ENCODE measurements at regions of chr22 and their contacts with region 1.

Region 1: DNA sequence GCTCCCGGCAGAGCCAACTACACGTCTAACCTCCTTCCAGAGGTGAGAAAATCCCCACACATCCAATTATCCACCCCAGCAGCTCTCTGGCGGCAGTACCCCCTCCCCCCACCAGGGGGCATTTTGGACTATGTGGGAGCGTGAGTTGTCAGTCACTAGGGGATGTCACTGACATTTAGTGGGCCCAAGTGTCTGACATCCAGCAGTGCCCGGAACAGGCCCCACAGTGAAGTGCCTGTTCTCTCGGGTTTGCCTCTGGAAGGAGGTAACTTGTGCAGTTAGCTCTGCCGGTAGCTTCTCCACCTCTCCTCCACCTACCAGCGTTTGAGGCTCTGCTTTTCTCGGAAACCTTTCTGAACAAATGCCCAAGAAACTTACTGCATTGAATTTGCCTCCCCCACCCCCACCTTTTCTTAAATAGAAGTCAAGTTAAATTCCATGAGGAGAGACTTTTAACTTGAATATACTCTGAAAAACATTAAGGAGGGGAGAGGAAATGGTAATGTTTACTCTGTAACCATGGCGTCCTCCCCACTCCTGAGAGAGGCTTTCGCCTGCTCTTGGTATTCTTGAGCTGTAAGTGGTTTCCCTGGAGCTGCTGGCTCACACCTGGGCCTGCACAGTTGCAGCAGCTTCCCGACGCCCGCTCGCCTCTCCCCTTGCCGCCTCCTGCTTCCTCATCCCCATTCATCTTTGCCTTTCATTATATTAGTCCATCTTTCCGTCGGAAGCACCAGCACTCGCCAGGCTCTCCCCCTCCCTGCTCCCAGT is 112.8 kb downstream of the WNT7B start:
- DNase-seq: peak; percentile 64
- H3K4me3 ChIP-seq: no peak overlapping the region
- H3K27ac ChIP-seq: no peak overlapping the region
- H3K4me1 ChIP-seq: peaks cover 0 to 28% (median 23%) of the 10 kb centered on the region in 4 donors
- H3K27me3 ChIP-seq: peaks cover 23 to 38% (median 29%) of the 10 kb centered on the region in 3 donors
- CTCF ChIP-seq: peak in 3 of 4 experiments; percentile 41 to 74 (median 72)
- EP300 ChIP-seq: no peak
- POLR2A ChIP-seq: no peak

Region 2: GRCh38 chr22:45785458-45785857 is 78.7 kb before region 1 on chr22:
- intact Hi-C with region 1: no loop called
- DNase-seq: no peak
- H3K4me3 ChIP-seq: no peak overlapping the region
- H3K27ac ChIP-seq: no peak overlapping the region
- H3K4me1 ChIP-seq: peaks cover 0 to 21% (median 19%) of the 10 kb centered on the region in 4 donors
- H3K27me3 ChIP-seq: no peaks in the 10 kb centered on the region
- CTCF ChIP-seq: no peak
- EP300 ChIP-seq: no peak
- POLR2A ChIP-seq: no peak

Region 3: DNA sequence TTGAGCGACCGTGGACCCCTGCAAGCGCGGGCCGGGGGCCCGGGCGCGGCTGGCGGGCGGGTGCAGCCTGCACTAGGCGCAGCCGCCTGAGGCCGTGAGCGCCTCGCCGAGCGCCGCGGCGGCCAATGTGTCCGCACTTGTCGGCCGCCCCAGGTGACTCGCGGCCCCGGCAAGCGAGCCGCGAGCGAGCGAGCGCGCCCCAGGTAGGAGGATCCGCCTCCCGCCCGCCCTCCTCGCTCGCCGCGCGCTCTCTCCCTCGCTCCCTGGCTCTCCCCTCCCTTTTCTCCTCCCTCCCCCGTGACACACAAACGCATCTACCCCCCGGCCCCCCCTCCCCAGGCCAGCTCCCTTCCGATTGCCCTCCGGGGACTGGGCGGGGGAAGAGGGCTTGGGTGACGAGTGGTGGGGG is 112.8 kb after region 1 on chr22 and contains the start of gene WNT7B:
- intact Hi-C with region 1: loop called (anchors 1 kb)
- DNase-seq: no peak
- H3K4me3 ChIP-seq: peak within 1 kb of the TSS in 3 of 4 donors; percentile 12 to 35 (median 27)
- H3K27ac ChIP-seq: no peak within 1 kb of the TSS
- H3K4me1 ChIP-seq: peaks cover 0 to 47% (median 36%) of the 10 kb centered on the region in 4 donors
- H3K27me3 ChIP-seq: peaks cover 47 to 70% (median 68%) of the 10 kb centered on the region in 3 donors
- CTCF ChIP-seq: no peak
- EP300 ChIP-seq: no peak
- POLR2A ChIP-seq: no peak
- total RNA-seq, gene WNT7B: not detected

Measured in sigmoid colon (tissue), 7 donors.